ENCODE measurements at regions of chr2 and their contacts with region 1.

Region 1: GRCh38 chr2:74250189-74250631 is 51.8 kb downstream of the MTHFD2 start:
- DNase-seq: peak; percentile 66
- ATAC-seq: peak; percentile 84
- H3K4me3 Mint-ChIP-seq: no peak overlapping the region
- H3K27ac Mint-ChIP-seq: no peak overlapping the region
- H3K4me1 Mint-ChIP-seq: peaks cover 5% of the 10 kb centered on the region
- H3K27me3 Mint-ChIP-seq: no peaks in the 10 kb centered on the region

Region 2: GRCh38 chr2:74066518-74067203 is 183.5 kb before region 1 on chr2:
- CTCF ChIA-PET with region 1: no interaction called
- DNase-seq: no peak
- ATAC-seq: no peak
- H3K4me3 Mint-ChIP-seq: no peak overlapping the region
- H3K27ac Mint-ChIP-seq: no peak overlapping the region
- H3K4me1 Mint-ChIP-seq: no peaks in the 10 kb centered on the region
- H3K27me3 Mint-ChIP-seq: no peaks in the 10 kb centered on the region

Region 3: DNA sequence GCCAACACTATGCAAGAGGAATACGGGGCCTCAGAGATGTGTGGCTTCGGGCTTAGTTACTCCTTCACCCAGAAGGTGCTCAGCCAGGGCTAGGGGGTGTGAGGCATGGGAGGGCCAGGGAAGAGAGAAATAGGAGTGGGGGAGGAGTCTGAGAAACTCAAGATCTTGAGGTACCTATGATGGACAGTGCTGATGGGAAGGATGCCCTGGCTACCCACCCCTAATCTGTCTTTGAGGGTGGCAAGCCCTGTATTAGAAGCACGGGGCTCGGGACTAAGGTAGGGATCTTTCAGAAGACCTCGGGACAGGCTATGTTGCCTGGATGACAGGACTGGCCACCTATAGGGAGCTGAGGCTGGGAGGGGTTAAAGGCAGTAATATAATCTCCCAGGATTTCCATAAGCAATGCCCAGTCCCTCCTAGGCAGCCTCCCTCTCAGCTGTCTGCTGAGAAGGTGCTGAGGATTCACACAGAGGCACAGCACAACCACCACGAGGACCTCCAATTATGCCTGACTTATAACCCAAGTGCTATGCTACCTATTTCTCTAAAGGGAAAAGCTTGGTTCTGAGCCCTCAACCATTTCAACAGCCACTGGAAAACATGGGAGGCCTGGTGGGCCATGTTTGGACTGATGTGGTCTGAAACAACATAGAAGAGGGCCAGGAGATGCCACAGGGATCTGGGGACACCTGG is 28.5 kb before region 1 on chr2:
- CTCF ChIA-PET with region 1: no interaction called
- DNase-seq: no peak
- ATAC-seq: no peak
- H3K4me3 Mint-ChIP-seq: no peak overlapping the region
- H3K27ac Mint-ChIP-seq: no peak overlapping the region
- H3K4me1 Mint-ChIP-seq: peaks cover 11% of the 10 kb centered on the region
- H3K27me3 Mint-ChIP-seq: no peaks in the 10 kb centered on the region

Region 4: DNA sequence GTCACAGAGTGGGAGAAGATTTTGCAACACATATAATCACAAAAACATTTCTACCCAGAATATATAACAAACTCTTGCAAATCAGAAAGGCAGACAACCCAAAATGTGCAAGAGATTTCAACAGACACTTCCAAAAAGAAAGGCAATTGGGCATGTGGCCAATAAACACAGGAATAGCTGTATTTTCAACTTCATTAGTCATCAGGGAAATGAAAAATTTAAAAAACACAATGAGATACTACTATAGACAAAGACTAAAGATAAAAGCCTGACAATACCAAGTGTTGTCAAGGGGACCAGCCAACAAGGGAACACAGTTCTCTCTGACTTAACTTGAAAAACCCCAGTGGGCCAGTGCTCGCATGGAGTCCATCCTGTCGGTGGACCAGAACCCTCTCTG is 11.3 kb before region 1 on chr2:
- CTCF ChIA-PET with region 1: interaction called, 11 read pairs
- DNase-seq: no peak
- ATAC-seq: no peak
- H3K4me3 Mint-ChIP-seq: no peak overlapping the region
- H3K27ac Mint-ChIP-seq: no peak overlapping the region
- H3K4me1 Mint-ChIP-seq: peaks cover 2% of the 10 kb centered on the region
- H3K27me3 Mint-ChIP-seq: no peaks in the 10 kb centered on the region

Region 5: DNA sequence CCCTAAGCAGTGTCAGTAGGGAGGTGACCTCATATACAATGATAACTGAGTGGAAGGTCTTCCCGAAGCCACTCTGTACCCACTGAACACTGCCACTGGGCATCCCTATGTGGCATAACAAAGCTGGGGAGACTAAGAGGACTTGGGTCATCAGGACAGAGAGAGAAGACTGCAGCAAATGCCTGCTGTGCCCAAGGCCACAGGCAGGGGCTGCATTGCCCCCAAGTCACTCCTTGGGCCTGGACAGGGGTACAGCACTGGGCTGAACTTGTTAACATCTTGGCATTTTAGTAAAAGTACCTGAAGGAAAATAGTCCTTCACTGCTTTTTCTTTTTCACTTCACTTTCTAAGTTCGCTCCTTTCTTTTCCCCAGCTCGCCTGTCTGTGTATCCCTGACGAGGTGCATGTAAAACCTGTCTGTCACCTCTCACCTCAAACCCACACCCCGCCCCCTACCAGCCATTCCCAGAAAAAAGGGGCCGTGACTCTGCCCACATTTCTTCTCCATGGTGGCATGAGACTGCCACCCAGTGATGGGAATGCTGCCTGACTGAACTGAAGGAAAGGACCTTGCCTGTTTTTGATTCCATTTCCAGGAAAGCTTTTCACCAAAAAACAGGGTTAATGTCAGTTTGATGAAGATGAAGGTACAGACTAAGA is 11.1 kb after region 1 on chr2:
- CTCF ChIA-PET with region 1: interaction called, 17 read pairs
- DNase-seq: no peak
- ATAC-seq: no peak
- H3K4me3 Mint-ChIP-seq: no peak overlapping the region
- H3K27ac Mint-ChIP-seq: no peak overlapping the region
- H3K4me1 Mint-ChIP-seq: peaks cover 6% of the 10 kb centered on the region
- H3K27me3 Mint-ChIP-seq: no peaks in the 10 kb centered on the region

Region 6: DNA sequence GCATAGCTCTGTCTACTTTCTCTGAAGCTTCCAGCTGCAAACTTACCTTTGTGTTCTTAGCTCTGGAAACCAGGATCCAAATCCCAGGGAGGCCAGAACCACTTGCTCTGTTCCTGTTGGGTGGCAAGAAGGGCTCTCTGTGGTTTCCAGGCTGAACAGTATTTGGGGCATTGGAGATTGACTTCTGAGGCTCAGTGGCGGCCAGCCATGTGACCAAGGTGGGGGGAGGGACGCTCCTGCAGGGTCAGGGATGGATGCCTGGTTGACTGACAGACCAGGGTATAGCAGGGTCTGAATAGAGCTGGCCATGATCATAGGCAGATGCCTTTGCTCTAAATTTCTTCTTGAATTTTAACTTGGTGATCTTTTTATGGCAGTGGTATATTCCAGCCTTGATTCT is 77.9 kb after region 1 on chr2:
- CTCF ChIA-PET with region 1: interaction called, 76 read pairs
- DNase-seq: no peak
- ATAC-seq: no peak
- H3K4me3 Mint-ChIP-seq: no peak overlapping the region
- H3K27ac Mint-ChIP-seq: no peak overlapping the region
- H3K4me1 Mint-ChIP-seq: peaks cover 6% of the 10 kb centered on the region
- H3K27me3 Mint-ChIP-seq: no peaks in the 10 kb centered on the region

Region 7: DNA sequence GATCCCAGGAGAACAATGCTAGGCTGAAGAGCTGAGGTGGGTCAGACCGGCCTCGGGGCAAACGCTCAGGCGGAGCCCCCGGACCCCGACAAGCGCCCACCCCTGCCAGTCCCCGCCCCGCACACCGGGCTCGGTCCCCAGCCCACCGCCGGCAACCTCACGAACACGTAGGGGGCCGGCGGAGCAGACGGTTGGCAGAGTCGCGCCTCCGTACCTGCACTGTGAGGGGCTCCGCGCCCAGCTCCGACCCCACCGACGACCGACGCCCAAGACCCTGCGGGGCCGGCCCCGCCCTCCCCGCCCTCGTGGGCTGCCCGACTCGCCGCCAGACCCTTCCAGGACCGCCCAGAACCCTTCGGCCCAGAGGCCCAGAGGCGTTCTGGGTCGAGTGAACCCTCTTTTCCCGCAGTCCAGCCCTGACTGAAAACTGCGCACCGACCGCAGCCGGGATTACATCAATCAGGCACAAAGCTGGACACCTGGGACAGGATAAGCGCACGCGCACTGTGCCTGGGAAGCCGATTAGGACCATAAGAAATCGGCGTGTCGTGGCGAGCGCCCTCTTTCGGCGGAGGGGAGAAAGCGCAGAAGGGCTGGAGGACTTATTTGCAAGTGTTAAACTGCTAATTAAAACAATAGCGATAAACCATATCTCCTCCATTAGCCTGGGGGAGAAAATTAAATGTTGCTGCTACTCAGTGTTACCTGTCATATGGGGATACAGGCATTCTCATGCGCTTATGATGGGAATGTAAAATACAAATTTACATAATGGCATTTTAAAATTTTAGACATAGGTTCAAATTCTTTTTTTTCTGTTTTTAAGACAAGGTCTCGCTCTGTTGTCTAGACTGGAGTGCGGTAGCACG is 141.6 kb after region 1 on chr2:
- CTCF ChIA-PET with region 1: interaction called, 30 read pairs
- DNase-seq: peak; percentile 96
- ATAC-seq: peak; percentile 82
- H3K4me3 Mint-ChIP-seq: peak overlapping the region; percentile 86
- H3K27ac Mint-ChIP-seq: peak overlapping the region; percentile 97
- H3K4me1 Mint-ChIP-seq: peaks cover 6% of the 10 kb centered on the region
- H3K27me3 Mint-ChIP-seq: peaks cover 8% of the 10 kb centered on the region